AG04450 (cell line): ENCODE measurements at regions of chr12 and their contacts with region 1.

Region 1: GRCh38 chr12:48936379-48936979 is 11.2 kb upstream of the FKBP11 start:
- DNase-seq: peak; percentile 59
- H3K4me3 ChIP-seq: no peak overlapping the region
- H3K27ac ChIP-seq: no peak overlapping the region
- H3K27me3 ChIP-seq: no peaks in the 10 kb centered on the region
- CTCF ChIP-seq: peak; percentile 95

Region 2: DNA sequence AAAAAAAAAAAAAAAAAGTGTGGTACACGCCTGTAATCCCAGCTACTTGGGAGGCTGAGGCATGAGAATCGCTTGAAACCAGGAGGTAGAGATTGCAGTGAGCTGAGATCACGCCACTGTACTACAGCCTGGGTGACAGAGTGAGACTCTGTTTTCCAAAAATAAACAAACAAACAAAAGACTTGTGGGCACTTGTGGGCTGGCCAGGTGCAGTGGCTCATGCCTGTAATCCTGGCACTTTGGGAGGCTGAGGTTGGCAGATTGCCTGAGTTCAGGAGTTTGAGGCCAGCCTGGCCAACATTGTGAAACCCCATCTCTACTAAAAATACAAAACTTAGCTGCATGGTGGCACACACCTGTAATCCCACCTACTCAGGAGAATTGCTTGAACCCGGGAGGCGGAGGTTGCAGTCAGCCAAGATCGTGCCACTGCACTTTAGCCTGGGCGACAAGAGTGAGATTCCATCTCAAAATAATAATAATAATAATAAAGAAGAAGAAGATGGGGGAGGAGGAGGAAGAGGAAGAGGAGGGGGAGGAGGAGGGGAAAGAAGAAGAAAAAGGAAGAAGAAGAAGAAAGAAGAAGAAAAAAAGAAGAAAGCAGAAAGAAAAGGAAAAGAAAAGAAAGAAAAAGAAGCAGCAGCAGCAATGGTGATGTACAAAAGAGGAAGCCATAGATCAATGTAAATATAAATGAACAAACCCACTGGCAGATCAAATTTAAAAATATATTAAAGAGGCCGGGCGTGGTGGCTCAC is 192.0 kb before region 1 on chr12:
- CTCF ChIA-PET with region 1: no interaction called
- POLR2A ChIA-PET with region 1: no interaction called
- DNase-seq: no peak
- H3K4me3 ChIP-seq: no peak overlapping the region
- H3K27ac ChIP-seq: no peak overlapping the region
- H3K27me3 ChIP-seq: peaks cover 12% of the 10 kb centered on the region
- CTCF ChIP-seq: no peak

Region 3: GRCh38 chr12:48903982-48904411 is 32.5 kb before region 1 on chr12:
- CTCF ChIA-PET with region 1: interaction called, 14 read pairs
- POLR2A ChIA-PET with region 1: no interaction called
- DNase-seq: peak; percentile 62
- H3K4me3 ChIP-seq: peak overlapping the region; percentile 60
- H3K27ac ChIP-seq: no peak overlapping the region
- H3K27me3 ChIP-seq: no peaks in the 10 kb centered on the region
- CTCF ChIP-seq: peak; percentile 78

Region 4: GRCh38 chr12:48924617-48925303 is 11.7 kb before region 1 on chr12:
- CTCF ChIA-PET with region 1: interaction called, 24 read pairs
- POLR2A ChIA-PET with region 1: interaction called, 8 read pairs
- DNase-seq: no peak
- H3K4me3 ChIP-seq: peak overlapping the region; percentile 81
- H3K27ac ChIP-seq: peak overlapping the region; percentile 11
- H3K27me3 ChIP-seq: no peaks in the 10 kb centered on the region
- CTCF ChIP-seq: peak; percentile 65